ENCODE measurements at regions of chr12 and their contacts with region 1.

Region 1: GRCh38 chr12:93979189-93979588 is 169.2 kb upstream of the PLXNC1 start:
- DNase-seq: no peak
- H3K4me3 ChIP-seq: no peak overlapping the region
- H3K27ac ChIP-seq: no peak overlapping the region
- H3K4me1 ChIP-seq: no peaks in the 10 kb centered on the region
- H3K27me3 ChIP-seq: no peaks in the 10 kb centered on the region
- CTCF ChIP-seq: peak; percentile 48

Region 2: DNA sequence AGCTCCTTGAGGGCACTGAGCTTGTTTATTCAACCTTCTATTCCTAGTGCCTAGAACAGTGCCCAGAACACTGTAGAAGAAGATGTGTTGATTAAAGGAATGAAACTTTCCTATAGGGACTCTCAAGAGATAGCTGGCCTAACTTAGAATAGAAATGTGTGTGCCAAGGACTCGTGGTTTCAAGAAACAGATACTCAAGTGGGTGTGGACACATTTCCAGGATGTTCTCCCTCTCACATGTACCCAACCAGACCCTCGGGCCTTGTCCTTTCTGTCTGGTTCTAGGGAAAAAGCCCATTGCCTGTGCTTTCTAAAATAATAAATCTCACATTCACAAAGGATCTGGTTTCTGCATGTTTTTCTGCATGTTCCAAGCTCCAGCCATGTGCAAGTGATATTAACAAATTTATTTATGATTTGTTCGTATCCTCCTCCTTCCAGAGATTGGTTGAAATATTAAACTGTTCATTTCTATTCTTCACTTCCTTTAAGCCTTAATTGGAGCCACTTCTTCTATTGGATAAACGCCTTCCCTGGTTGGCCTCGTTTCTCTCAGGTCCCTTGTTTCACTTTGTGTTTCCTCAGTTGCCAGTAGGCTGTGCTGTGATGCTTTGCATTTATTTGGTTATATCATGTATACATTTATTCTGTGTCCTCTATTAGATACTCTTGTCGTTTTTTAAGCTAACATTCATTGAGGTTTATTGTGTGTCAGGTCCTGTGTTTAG is 212.2 kb before region 1 on chr12:
- CTCF ChIA-PET with region 1: no interaction called
- POLR2A ChIA-PET with region 1: no interaction called
- intact Hi-C with region 1: loop called (anchors 5 kb)
- DNase-seq: peak; percentile 74
- H3K4me3 ChIP-seq: no peak overlapping the region
- H3K27ac ChIP-seq: no peak overlapping the region
- H3K4me1 ChIP-seq: peaks cover 16% of the 10 kb centered on the region
- H3K27me3 ChIP-seq: no peaks in the 10 kb centered on the region
- CTCF ChIP-seq: peak; percentile 77

Region 3: DNA sequence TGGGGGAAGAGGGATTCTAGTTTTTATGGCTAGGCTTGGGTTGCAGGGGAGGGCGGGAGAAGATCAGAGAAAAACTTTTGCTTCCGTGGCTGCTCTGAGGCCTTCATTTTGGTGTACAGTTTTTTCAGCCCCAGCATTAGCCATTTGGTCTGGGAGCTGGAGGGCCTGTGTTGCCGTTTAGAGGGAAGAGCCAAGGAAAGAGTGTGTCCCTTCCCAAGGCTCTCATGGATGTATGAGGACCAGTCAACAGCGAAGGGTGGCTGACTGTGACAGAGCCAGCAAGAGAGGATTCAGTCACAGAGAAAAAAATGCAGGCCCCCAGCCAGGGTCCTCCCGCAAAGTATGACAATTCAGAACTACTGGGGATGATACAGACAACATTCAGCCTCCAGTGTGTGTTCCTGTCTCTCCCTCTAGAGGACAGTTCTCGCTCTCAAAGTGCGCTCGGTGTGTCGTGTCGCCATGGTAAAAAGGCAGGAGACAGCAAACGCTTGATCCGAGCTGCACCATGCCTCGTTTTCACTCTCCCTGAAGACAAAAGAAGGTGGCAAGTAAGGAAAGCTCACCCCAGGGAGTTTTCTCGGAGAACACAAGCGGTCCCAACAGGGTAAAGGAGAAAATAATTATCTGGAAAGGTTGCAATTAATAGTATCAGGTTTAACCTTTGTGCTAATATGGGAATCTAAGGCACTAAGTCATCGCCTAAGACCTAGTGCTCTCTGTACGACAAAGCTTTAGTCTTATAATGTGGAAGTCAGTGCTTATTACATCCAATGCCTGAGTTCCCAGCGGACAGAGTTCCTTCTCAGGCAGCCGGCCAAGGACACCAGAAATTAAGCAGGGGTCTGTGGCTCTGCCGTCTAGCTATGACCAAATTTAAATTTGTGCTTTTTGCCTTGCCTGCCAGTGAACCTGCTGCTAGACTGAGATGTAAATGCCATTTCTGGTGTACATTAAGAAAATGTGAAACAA is 11.9 kb after region 1 on chr12:
- CTCF ChIA-PET with region 1: interaction called, 10 read pairs
- POLR2A ChIA-PET with region 1: no interaction called
- intact Hi-C with region 1: no loop called
- DNase-seq: peak; percentile 30
- H3K4me3 ChIP-seq: no peak overlapping the region
- H3K27ac ChIP-seq: no peak overlapping the region
- H3K4me1 ChIP-seq: no peaks in the 10 kb centered on the region
- H3K27me3 ChIP-seq: no peaks in the 10 kb centered on the region
- CTCF ChIP-seq: no peak; the same call in 1 of the 2 replicates

Measured in A673 (cell line).